CD8-positive, alpha-beta T cell (primary cell): ENCODE measurements at regions of chr15 and their contacts with region 1.

Region 1: GRCh38 chr15:75639709-75640482 is at the start of gene IMP3:
- DNase-seq: peak; percentile 81 to 98 (median 94)
- ATAC-seq: peak; percentile 90
- H3K4me3 ChIP-seq: peak within 1 kb of the TSS; percentile 80 to 99
- H3K4me3 Mint-ChIP-seq: peak within 1 kb of the TSS; percentile 91
- H3K27ac ChIP-seq: peak within 1 kb of the TSS; percentile 79 to 98
- H3K27ac Mint-ChIP-seq: peak within 1 kb of the TSS; percentile 97
- H3K4me1 ChIP-seq: peaks cover 31% of the 10 kb centered on the region
- H3K4me1 Mint-ChIP-seq: peaks cover 41% of the 10 kb centered on the region
- H3K27me3 ChIP-seq: no peaks in the 10 kb centered on the region
- H3K27me3 Mint-ChIP-seq: no peaks in the 10 kb centered on the region
- CTCF ChIP-seq: no peak
- total RNA-seq, gene IMP3: 67.1 to 69.5 TPM

Region 2: DNA sequence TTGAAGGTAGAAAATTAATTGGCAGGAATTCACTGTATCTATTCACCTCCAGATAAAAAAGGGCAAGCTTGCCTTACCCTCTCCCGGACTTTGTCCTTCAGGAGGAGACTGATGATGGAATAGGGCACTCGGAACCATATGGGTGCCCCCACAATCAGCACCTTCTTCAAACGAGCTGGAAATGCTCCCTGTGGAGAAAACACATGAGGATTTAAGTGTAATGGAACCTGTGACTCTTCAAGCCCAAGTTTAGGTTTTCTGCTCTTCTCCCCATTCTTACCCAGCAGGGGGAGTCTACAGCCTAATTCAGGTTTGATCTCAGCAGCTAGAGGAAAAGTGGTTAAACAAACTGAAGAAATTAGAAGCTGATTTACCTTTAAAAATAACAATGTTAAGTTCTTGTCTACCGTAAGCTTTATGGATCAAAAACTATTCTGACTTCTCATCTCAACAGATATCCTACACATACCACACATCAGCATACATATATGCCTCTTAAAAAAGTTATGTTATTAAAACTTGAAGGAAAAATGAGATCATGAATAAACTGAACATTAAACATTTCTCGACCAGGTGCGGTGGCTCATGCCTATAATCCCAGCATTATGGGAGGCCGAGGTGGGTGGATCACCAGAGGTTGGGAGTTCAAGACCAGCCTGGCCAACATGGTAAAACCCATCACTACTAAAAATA is 130.9 kb before region 1 on chr15:
- CTCF ChIA-PET with region 1: interaction called, 34 read pairs
- POLR2A ChIA-PET with region 1: interaction called, 22 read pairs
- intact Hi-C with region 1: loop called (anchors 1 kb)
- DNase-seq: peak in 5 of 9 experiments; percentile 11 to 64 (median 26)
- ATAC-seq: peak; percentile 54
- H3K4me3 ChIP-seq: no peak overlapping the region
- H3K4me3 Mint-ChIP-seq: no peak overlapping the region
- H3K27ac ChIP-seq: no peak overlapping the region
- H3K27ac Mint-ChIP-seq: peak overlapping the region; percentile 50
- H3K4me1 ChIP-seq: no peaks in the 10 kb centered on the region
- H3K4me1 Mint-ChIP-seq: peaks cover 5% of the 10 kb centered on the region
- H3K27me3 ChIP-seq: no peaks in the 10 kb centered on the region
- H3K27me3 Mint-ChIP-seq: no peaks in the 10 kb centered on the region
- CTCF ChIP-seq: peak; percentile 54

Region 3: DNA sequence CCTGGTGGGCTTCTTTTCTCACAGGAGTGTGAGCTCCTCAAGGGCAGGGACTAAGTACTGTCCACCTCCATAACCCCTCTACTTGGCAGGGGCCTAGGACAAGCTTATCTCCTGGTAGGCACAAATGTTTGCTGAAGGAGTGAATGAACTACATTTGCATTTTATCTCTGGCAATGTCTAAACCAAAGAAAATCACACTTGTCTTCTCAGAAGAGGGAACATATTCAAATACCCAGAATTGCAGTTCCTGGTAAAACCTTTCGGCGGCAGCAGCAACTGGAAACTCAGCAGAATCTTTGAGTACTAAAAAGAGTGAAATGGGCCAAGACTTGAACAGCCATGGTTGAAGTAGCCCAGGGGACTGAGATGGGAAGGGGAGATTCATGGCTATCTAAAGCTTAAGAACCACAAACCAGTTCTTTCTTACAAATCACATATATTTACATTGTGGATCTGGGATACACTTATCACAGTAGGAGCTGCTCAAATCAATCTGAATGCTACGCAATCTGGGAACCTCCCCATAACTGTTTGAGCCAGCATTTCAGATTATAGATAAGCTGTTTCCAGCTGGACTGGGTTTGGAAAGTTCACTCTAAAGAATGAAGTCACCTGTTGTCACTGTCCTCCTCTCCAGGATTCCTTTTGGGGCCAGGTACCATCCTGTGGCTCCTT is 42.1 kb before region 1 on chr15:
- CTCF ChIA-PET with region 1: interaction called, 11 read pairs
- POLR2A ChIA-PET with region 1: interaction called, 10 read pairs
- intact Hi-C with region 1: loop called in 1 of 2 experiments (anchors 2 kb)
- DNase-seq: peak in 4 of 9 experiments; percentile 22 to 55 (median 39)
- ATAC-seq: peak; percentile 44
- H3K4me3 ChIP-seq: no peak overlapping the region
- H3K4me3 Mint-ChIP-seq: no peak overlapping the region
- H3K27ac ChIP-seq: no peak overlapping the region
- H3K27ac Mint-ChIP-seq: no peak overlapping the region
- H3K4me1 ChIP-seq: peaks cover 13% of the 10 kb centered on the region
- H3K4me1 Mint-ChIP-seq: peaks cover 12% of the 10 kb centered on the region
- H3K27me3 ChIP-seq: no peaks in the 10 kb centered on the region
- H3K27me3 Mint-ChIP-seq: no peaks in the 10 kb centered on the region
- CTCF ChIP-seq: peak; percentile 52

Region 4: GRCh38 chr15:75625542-75626347 is 14.2 kb before region 1 on chr15 and contains the start of gene SNUPN:
- CTCF ChIA-PET with region 1: interaction called, 11 read pairs
- POLR2A ChIA-PET with region 1: interaction called, 105 read pairs
- intact Hi-C with region 1: loop called (anchors 1 kb)
- DNase-seq: peak; percentile 83 to 98 (median 93)
- ATAC-seq: peak; percentile 93
- H3K4me3 ChIP-seq: peak within 1 kb of the TSS; percentile 100
- H3K4me3 Mint-ChIP-seq: peak within 1 kb of the TSS; percentile 95
- H3K27ac ChIP-seq: peak within 1 kb of the TSS; percentile 75 to 99
- H3K27ac Mint-ChIP-seq: peak within 1 kb of the TSS; percentile 99
- H3K4me1 ChIP-seq: peaks cover 16% of the 10 kb centered on the region
- H3K4me1 Mint-ChIP-seq: peaks cover 34% of the 10 kb centered on the region
- H3K27me3 ChIP-seq: no peaks in the 10 kb centered on the region
- H3K27me3 Mint-ChIP-seq: no peaks in the 10 kb centered on the region
- CTCF ChIP-seq: no peak
- total RNA-seq, gene SNUPN: 7.7 TPM

Region 5: DNA sequence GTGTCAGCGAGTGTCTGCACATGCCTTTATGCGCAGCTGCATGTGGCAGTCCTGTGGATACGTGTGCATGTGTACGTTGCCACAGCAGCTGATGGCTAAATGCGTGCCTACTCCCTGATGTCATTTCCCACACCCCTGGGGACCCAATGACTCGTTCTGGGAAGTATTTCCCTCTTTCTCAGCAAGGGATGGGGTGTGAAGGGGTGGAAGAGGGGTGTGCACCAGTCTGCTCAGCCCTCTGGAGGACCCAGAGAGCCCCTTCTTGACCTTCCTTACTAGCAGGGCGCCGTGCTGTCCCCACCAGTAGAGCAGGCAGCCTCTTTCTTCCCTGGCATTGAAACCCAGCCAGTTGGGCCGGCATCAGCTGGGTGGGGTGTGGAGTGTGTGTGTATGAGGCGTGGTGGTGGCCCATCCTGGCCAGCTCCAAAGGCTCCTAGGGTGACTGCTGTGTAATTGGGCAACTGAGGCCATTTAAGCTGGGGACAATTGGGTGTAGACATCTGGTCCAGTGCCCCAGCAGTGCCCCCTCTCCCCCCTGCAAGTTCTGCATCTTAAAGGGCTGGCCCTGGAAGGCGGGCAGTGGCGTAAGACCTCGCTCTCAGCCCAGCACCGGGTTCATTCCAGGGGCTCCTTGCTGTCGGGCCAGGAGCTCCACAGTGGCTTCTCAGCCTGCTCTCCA is 27.1 kb after region 1 on chr15:
- CTCF ChIA-PET with region 1: no interaction called
- POLR2A ChIA-PET with region 1: no interaction called
- intact Hi-C with region 1: no loop called
- DNase-seq: no peak
- ATAC-seq: no peak
- H3K4me3 ChIP-seq: no peak overlapping the region
- H3K4me3 Mint-ChIP-seq: no peak overlapping the region
- H3K27ac ChIP-seq: no peak overlapping the region
- H3K27ac Mint-ChIP-seq: no peak overlapping the region
- H3K4me1 ChIP-seq: no peaks in the 10 kb centered on the region
- H3K4me1 Mint-ChIP-seq: no peaks in the 10 kb centered on the region
- H3K27me3 ChIP-seq: no peaks in the 10 kb centered on the region
- H3K27me3 Mint-ChIP-seq: no peaks in the 10 kb centered on the region
- CTCF ChIP-seq: no peak

Region 6: DNA sequence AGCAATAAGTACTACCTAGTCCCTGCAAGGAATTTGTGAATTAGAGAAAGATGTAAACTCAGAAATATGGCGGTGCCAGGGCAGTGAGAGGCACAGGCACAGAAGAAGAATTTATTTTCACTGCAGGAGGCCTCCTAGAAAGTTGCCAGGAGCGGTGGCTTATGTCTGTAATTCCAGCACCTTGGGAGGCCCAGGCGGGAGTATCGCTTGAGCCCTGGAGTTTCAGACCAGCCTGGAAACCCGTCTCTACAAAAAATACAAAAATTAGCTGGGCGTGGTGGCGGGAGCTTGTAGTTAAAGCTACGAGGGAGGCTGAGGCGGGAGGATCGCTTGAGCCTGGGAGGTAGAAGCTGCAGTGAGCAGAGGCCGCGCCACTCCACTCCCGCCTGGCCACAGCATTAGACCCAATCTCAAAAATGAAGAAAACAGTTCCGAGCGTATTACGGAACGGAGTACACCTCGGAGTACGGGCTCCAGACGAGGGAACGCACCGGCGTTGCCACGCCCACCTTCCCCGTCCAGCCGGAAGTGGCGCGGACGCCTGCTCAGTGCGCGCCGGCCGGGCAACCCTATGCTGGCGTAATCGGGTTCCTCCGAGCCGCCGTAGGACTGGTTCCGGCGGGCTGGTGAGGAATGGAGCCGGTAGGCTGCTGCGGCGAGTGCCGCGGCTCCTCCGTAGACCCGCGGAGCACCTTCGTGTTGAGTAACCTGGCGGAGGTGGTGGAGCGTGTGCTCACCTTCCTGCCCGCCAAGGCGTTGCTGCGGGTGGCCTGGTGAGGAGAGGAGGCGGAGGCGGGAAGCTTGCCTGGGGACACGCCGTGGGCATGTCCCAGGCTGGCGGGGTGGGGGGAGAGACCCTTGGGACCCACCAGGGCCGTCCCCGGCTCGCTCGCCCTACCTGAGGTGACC is 263.7 kb after region 1 on chr15 and contains the start of gene FBXO22:
- CTCF ChIA-PET with region 1: no interaction called
- POLR2A ChIA-PET with region 1: interaction called, 3 read pairs
- intact Hi-C with region 1: loop called in 1 of 2 experiments (anchors 5 kb)
- DNase-seq: peak; percentile 78 to 93 (median 88)
- ATAC-seq: peak; percentile 90
- H3K4me3 ChIP-seq: peak within 1 kb of the TSS; percentile 83 to 84
- H3K4me3 Mint-ChIP-seq: peak within 1 kb of the TSS; percentile 98
- H3K27ac ChIP-seq: peak within 1 kb of the TSS; percentile 63 to 68
- H3K27ac Mint-ChIP-seq: peak within 1 kb of the TSS; percentile 95
- H3K4me1 ChIP-seq: peaks cover 19% of the 10 kb centered on the region
- H3K4me1 Mint-ChIP-seq: peaks cover 49% of the 10 kb centered on the region
- H3K27me3 ChIP-seq: no peaks in the 10 kb centered on the region
- H3K27me3 Mint-ChIP-seq: no peaks in the 10 kb centered on the region
- CTCF ChIP-seq: no peak
- total RNA-seq, gene FBXO22: 6.1 to 6.4 TPM